ENCODE measurements at regions of chr10 and their contacts with region 1.

Region 1: GRCh38 chr10:80046629-80047441 is 31.6 kb upstream of the TMEM254 start:
- DNase-seq: peak; percentile 64
- H3K4me3 ChIP-seq: no peak overlapping the region
- H3K27ac ChIP-seq: no peak overlapping the region
- H3K4me1 ChIP-seq: no peaks in the 10 kb centered on the region
- H3K27me3 ChIP-seq: no peaks in the 10 kb centered on the region
- CTCF ChIP-seq: peak; percentile 95

Region 2: DNA sequence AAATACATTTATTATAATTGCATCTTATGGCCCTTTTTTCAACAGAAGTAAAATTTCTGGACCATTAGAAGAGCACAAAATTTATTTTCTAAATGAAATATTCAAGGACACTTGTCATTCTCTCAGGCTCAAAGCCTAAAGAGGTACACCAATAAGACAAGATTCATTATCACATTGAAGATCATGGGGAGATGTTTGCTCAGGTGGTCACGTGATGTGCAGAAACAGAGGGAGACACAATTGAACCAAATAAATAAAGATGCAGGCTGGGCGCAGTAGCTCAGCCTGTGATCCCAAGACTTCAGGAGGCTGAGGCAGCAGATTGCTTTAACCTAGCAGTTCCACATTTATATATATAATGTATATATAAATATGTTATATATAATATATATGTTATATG is 21.6 kb before region 1 on chr10:
- intact Hi-C with region 1: loop called (anchors 2 kb)
- DNase-seq: no peak
- H3K4me3 ChIP-seq: no peak overlapping the region
- H3K27ac ChIP-seq: no peak overlapping the region
- H3K4me1 ChIP-seq: no peaks in the 10 kb centered on the region
- H3K27me3 ChIP-seq: no peaks in the 10 kb centered on the region
- CTCF ChIP-seq: no peak

Measured in left ventricle myocardium inferior (tissue), 1 donor.